CD4-positive, alpha-beta memory T cell (primary cell): ENCODE measurements at regions of chr12 and their contacts with region 1.

Region 1: DNA sequence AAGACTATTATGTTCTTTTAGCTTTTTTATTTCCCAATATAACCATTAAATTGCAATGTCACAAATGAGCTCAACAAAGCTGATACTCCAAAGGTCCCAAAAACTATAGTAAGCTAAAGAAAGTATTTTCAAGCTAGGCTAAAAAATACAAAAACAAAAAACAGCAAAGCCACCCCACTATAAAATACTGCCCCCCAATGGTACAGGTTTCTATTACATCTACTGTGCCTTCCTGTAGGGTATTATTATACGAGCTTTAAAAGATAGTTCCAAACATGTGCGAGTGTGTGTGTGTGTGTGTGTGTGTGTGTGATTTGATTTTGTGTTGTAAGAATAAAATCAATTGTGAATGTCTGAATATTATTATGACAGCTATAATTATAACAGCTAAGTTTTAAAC is 1.1 kb downstream of the IFNG start:
- DNase-seq: peak; percentile 37 to 63 (median 53)
- H3K4me3 ChIP-seq: no peak overlapping the region
- H3K4me3 Mint-ChIP-seq: peak overlapping the region; percentile 1 to 75 (median 58)
- H3K27ac ChIP-seq: no peak overlapping the region
- H3K27ac Mint-ChIP-seq: peak overlapping the region in 4 of 7 donors; percentile 13 to 66 (median 42)
- H3K4me1 ChIP-seq: peaks cover 42% of the 10 kb centered on the region
- H3K4me1 Mint-ChIP-seq: peaks cover 14 to 47% (median 28%) of the 10 kb centered on the region in 4 donors
- H3K27me3 ChIP-seq: no peaks in the 10 kb centered on the region
- H3K27me3 Mint-ChIP-seq: no peaks in the 10 kb centered on the region

Region 2: DNA sequence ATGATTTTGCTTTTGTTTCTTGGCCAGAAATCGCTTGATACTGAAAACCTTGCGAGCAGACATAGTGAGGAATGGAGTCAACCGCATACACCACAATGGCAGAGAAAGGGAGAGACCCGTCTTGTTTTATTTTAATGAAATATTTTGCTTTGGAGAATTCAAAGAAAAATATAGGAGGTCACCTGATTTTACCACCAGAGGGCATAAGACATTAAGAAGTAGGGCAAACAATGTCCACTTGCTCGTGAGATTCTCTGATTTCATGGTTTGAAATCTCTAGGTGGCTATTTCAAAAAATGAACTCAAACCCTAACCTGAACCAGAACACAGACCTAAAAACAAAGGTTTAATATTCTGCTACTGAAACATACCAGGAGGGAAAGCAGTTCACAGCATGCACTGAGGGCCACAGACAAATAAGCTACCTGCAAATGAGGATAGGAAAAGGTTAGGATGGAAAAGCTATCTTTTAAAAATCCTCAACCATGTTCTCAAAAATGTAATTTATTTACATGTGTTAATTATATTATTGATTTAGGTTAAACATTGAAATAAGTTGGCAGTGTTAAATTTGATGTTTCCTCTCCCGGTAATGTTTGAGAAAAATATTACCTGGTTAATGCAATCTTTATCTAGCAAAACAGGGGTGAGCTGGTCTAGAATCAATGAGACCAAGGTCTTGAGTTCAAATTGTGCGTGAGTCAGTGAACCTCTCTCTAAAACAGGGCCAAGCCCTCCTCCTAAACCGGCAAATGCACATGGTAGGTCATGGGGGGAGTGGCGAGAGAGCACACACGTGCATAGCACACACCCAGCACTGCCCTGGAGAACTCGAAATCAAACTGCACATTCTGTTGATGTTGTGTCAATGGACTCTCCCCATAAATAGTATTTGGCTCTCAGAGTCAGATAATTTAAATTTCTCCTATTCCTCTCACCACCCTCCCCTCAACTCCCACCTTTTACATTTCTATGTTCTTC is 156.7 kb before region 1 on chr12:
- CTCF ChIA-PET with region 1: interaction called, 4 read pairs
- POLR2A ChIA-PET with region 1: no interaction called
- intact Hi-C with region 1: loop called (anchors 2 kb)
- DNase-seq: peak in 1 of 5 donors; percentile 7
- H3K4me3 ChIP-seq: no peak overlapping the region
- H3K4me3 Mint-ChIP-seq: no peak overlapping the region
- H3K27ac ChIP-seq: no peak overlapping the region
- H3K27ac Mint-ChIP-seq: no peak overlapping the region
- H3K4me1 ChIP-seq: peaks cover 6% of the 10 kb centered on the region
- H3K4me1 Mint-ChIP-seq: peaks cover 6 to 19% (median 11%) of the 10 kb centered on the region in 4 donors
- H3K27me3 ChIP-seq: no peaks in the 10 kb centered on the region
- H3K27me3 Mint-ChIP-seq: no peaks in the 10 kb centered on the region

Region 3: DNA sequence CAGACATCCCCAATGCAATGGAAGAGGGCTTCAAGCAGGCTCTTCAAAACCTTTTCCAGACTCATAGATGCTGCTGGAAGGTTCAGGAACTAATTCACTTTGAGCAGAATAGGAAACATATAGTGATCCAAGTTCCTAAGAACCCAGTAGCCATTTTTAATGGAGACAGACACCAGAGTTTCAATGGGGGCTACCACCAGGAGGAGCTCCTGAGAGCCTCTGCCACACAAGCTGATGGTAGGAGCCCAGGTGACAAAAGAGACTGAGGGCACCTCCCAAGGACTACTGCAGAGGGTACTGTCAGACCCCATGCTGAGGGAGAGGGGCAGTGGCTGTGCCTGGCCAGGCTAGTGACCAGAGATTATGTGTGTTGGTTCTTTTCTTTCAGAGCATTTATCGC is 44.8 kb before region 1 on chr12:
- CTCF ChIA-PET with region 1: interaction called, 104 read pairs
- POLR2A ChIA-PET with region 1: interaction called, 13 read pairs
- intact Hi-C with region 1: loop called (anchors 1 kb)
- DNase-seq: peak in 4 of 5 donors; percentile 20 to 46 (median 34)
- H3K4me3 ChIP-seq: no peak overlapping the region
- H3K4me3 Mint-ChIP-seq: no peak overlapping the region
- H3K27ac ChIP-seq: no peak overlapping the region
- H3K27ac Mint-ChIP-seq: no peak overlapping the region
- H3K4me1 ChIP-seq: peaks cover 18% of the 10 kb centered on the region
- H3K4me1 Mint-ChIP-seq: peaks cover 14 to 27% (median 20%) of the 10 kb centered on the region in 4 donors
- H3K27me3 ChIP-seq: no peaks in the 10 kb centered on the region
- H3K27me3 Mint-ChIP-seq: peaks cover 0 to 1% of the 10 kb centered on the region in 2 donors

Region 4: DNA sequence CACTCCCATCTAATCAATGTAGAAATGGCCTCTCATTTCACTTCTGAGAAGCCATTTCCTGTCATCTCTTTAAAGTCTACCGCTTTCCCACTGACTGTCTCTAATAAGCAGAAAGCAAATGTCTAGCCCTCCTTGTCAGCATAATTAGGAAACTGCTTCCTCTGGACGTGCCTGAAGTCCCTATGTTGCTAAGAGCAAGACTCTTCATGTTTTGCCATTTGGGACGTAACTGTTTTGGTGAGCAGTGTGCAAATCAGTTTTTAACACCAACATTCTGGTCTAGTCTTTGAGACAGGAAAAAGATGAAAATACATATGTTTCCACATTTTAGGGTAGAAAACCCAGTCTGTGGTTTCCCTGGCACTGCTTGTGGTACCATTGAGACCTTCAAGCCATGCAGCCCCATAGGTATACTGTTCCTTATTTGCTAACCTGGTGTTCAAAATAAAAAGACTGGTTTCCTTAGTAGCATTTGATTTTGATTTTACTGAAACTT is 21.0 kb before region 1 on chr12:
- CTCF ChIA-PET with region 1: interaction called, 26 read pairs
- POLR2A ChIA-PET with region 1: interaction called, 3 read pairs
- intact Hi-C with region 1: no loop called
- DNase-seq: no peak
- H3K4me3 ChIP-seq: peak overlapping the region in 1 of 2 donors; percentile 4
- H3K4me3 Mint-ChIP-seq: peak overlapping the region in 6 of 8 donors; percentile 4 to 75 (median 26)
- H3K27ac ChIP-seq: no peak overlapping the region
- H3K27ac Mint-ChIP-seq: peak overlapping the region in 6 of 7 donors; percentile 38 to 83 (median 70)
- H3K4me1 ChIP-seq: peaks cover 23% of the 10 kb centered on the region
- H3K4me1 Mint-ChIP-seq: peaks cover 25 to 42% (median 35%) of the 10 kb centered on the region in 4 donors
- H3K27me3 ChIP-seq: no peaks in the 10 kb centered on the region
- H3K27me3 Mint-ChIP-seq: no peaks in the 10 kb centered on the region

Region 5: GRCh38 chr12:68180792-68181744 is 22.6 kb after region 1 on chr12:
- CTCF ChIA-PET with region 1: interaction called, 10 read pairs
- POLR2A ChIA-PET with region 1: interaction called, 9 read pairs
- intact Hi-C with region 1: no loop called
- DNase-seq: peak; percentile 56 to 63 (median 57)
- H3K4me3 ChIP-seq: no peak overlapping the region
- H3K4me3 Mint-ChIP-seq: peak overlapping the region in 7 of 8 donors; percentile 4 to 56 (median 40)
- H3K27ac ChIP-seq: peak overlapping the region; percentile 29
- H3K27ac Mint-ChIP-seq: peak overlapping the region; percentile 49 to 96 (median 81)
- H3K4me1 ChIP-seq: peaks cover 51% of the 10 kb centered on the region
- H3K4me1 Mint-ChIP-seq: peaks cover 37 to 51% (median 44%) of the 10 kb centered on the region in 4 donors
- H3K27me3 ChIP-seq: no peaks in the 10 kb centered on the region
- H3K27me3 Mint-ChIP-seq: no peaks in the 10 kb centered on the region